A549 (cell line): ENCODE measurements at regions of chr2 and their contacts with region 1.

Region 1: GRCh38 chr2:233572468-233572867 is 5.9 kb upstream of the USP40 start:
- DNase-seq: no peak
- ATAC-seq: no peak
- H3K4me3 ChIP-seq: no peak overlapping the region
- H3K27ac ChIP-seq: peak overlapping the region in 1 of 2 experiments; percentile 61; a peak in 2 of 6 replicates
- H3K4me1 ChIP-seq: no peaks in the 10 kb centered on the region
- CTCF ChIP-seq: no peak
- EP300 ChIP-seq: no peak
- POLR2A ChIP-seq: no peak
- RAD21 ChIP-seq: no peak

Region 2: GRCh38 chr2:233822781-233823730 is 250.6 kb after region 1 on chr2:
- CTCF ChIA-PET with region 1: no interaction called
- POLR2A ChIA-PET with region 1: interaction called, 11 read pairs
- DNase-seq: peak in 1 of 2 experiments; percentile 40
- ATAC-seq: peak in 1 of 2 experiments; percentile 30; a peak in 3 of 6 replicates
- H3K4me3 ChIP-seq: no peak overlapping the region
- H3K27ac ChIP-seq: peak overlapping the region; percentile 65 to 81
- H3K4me1 ChIP-seq: peaks cover 20% of the 10 kb centered on the region
- CTCF ChIP-seq: no peak
- EP300 ChIP-seq: no peak
- POLR2A ChIP-seq: no peak
- RAD21 ChIP-seq: no peak